ENCODE measurements at regions of chr7 and their contacts with region 1.

Region 1: GRCh38 chr7:112550468-112551060 is 69.8 kb downstream of the LSMEM1 start:
- DNase-seq: peak; percentile 64 to 85 (median 66)
- ATAC-seq: peak; percentile 88
- H3K4me3 ChIP-seq: no peak overlapping the region
- H3K27ac ChIP-seq: no peak overlapping the region
- H3K4me1 ChIP-seq: peaks cover 0 to 5% of the 10 kb centered on the region in 2 experiments; a peak in 2 of 5 replicates
- H3K27me3 ChIP-seq: peaks cover 0 to 10% of the 10 kb centered on the region in 2 experiments; a peak in 3 of 5 replicates
- CTCF ChIP-seq: peak; percentile 90 to 99 (median 91)
- EP300 ChIP-seq: 0 out of 2 replicates have a peak, but pooled peaks have one; percentile 27
- POLR2A ChIP-seq: no peak
- RAD21 ChIP-seq: peak; percentile 99 to 100

Region 2: GRCh38 chr7:112481833-112482670 is 68.5 kb before region 1 on chr7:
- CTCF ChIA-PET with region 1: no interaction called
- POLR2A ChIA-PET with region 1: no interaction called
- in situ Hi-C with region 1: no loop called
- intact Hi-C with region 1: loop called (anchors 1 kb)
- DNase-seq: peak in 2 of 4 experiments; percentile 50 to 67
- ATAC-seq: peak; percentile 49
- H3K4me3 ChIP-seq: no peak overlapping the region
- H3K27ac ChIP-seq: no peak overlapping the region
- H3K4me1 ChIP-seq: peaks cover 4 to 24% of the 10 kb centered on the region in 2 experiments; a peak in 3 of 5 replicates
- H3K27me3 ChIP-seq: no peaks in the 10 kb centered on the region
- CTCF ChIP-seq: no peak
- EP300 ChIP-seq: no peak
- POLR2A ChIP-seq: no peak
- RAD21 ChIP-seq: no peak

Region 3: GRCh38 chr7:112869111-112869757 is 318.7 kb after region 1 on chr7:
- CTCF ChIA-PET with region 1: interaction called, 15 read pairs
- POLR2A ChIA-PET with region 1: no interaction called
- in situ Hi-C with region 1: loop called (anchors 10 kb)
- intact Hi-C with region 1: loop called (anchors 1 kb)
- DNase-seq: peak; percentile 79 to 84 (median 82)
- ATAC-seq: peak; percentile 97
- H3K4me3 ChIP-seq: no peak overlapping the region
- H3K27ac ChIP-seq: no peak overlapping the region
- H3K4me1 ChIP-seq: no peaks in the 10 kb centered on the region; a peak in 1 of 5 replicates
- H3K27me3 ChIP-seq: no peaks in the 10 kb centered on the region
- CTCF ChIP-seq: peak; percentile 99 to 100 (median 100)
- EP300 ChIP-seq: no peak
- POLR2A ChIP-seq: no peak
- RAD21 ChIP-seq: peak; percentile 74 to 95

Region 4: GRCh38 chr7:113015032-113015645 is 464.6 kb after region 1 on chr7:
- CTCF ChIA-PET with region 1: no interaction called
- POLR2A ChIA-PET with region 1: no interaction called
- in situ Hi-C with region 1: no loop called
- intact Hi-C with region 1: loop called (anchors 5 kb)
- DNase-seq: peak in 2 of 4 experiments; percentile 20 to 52
- ATAC-seq: peak; percentile 65
- H3K4me3 ChIP-seq: no peak overlapping the region
- H3K27ac ChIP-seq: no peak overlapping the region
- H3K4me1 ChIP-seq: peaks cover 0 to 3% of the 10 kb centered on the region in 2 experiments; a peak in 1 of 5 replicates
- H3K27me3 ChIP-seq: no peaks in the 10 kb centered on the region
- CTCF ChIP-seq: peak; percentile 36 to 80 (median 48); a peak in 4 of 6 replicates
- EP300 ChIP-seq: no peak
- POLR2A ChIP-seq: no peak
- RAD21 ChIP-seq: peak; percentile 93 to 94

Region 5: DNA sequence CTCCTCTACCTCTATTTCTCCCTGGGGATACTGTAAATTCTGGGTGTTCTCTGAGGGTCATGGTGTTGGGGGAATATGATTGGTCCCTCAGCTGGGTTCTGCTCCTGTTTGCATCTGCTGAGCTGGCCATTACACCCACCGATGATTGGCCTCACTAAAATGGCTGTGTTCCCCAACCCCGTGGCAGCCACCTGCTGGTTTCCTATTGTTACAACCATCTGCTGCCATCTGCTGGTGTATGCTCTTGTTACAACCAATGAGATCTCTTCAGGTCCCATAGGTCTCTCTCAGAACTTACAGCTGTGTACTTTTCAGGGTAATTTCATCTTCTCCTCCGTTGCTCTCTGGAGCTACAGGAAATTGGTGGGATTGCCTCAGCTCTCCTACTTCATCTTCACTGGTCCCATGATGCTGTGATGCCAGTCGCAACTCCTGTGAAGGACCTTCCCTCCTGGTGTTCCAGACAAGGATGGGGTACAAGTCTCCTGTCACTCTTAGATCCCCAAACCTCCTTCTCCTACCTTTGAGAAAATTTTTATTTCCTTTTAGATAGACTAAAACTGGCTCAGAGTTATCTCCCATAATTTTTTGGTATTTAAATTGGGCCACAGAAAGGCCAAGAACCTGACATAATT is 871.2 kb after region 1 on chr7:
- CTCF ChIA-PET with region 1: interaction called, 6 read pairs
- POLR2A ChIA-PET with region 1: no interaction called
- in situ Hi-C with region 1: no loop called
- intact Hi-C with region 1: loop called (anchors 1 kb)
- DNase-seq: peak; percentile 78 to 93 (median 80)
- ATAC-seq: peak; percentile 100
- H3K4me3 ChIP-seq: no peak overlapping the region
- H3K27ac ChIP-seq: no peak overlapping the region
- H3K4me1 ChIP-seq: no peaks in the 10 kb centered on the region
- H3K27me3 ChIP-seq: no peaks in the 10 kb centered on the region
- CTCF ChIP-seq: peak; percentile 95 to 99 (median 99)
- EP300 ChIP-seq: no peak
- POLR2A ChIP-seq: no peak
- RAD21 ChIP-seq: peak; percentile 94 to 95

Region 6: GRCh38 chr7:113710310-113711106 is 1159.9 kb after region 1 on chr7:
- CTCF ChIA-PET with region 1: no interaction called
- POLR2A ChIA-PET with region 1: no interaction called
- in situ Hi-C with region 1: no loop called
- intact Hi-C with region 1: loop called (anchors 1 kb)
- DNase-seq: peak; percentile 59 to 87 (median 75)
- ATAC-seq: peak; percentile 90
- H3K4me3 ChIP-seq: no peak overlapping the region
- H3K27ac ChIP-seq: no peak overlapping the region
- H3K4me1 ChIP-seq: no peaks in the 10 kb centered on the region
- H3K27me3 ChIP-seq: no peaks in the 10 kb centered on the region
- CTCF ChIP-seq: peak; percentile 70 to 92 (median 88)
- EP300 ChIP-seq: peak; percentile 3; the same call in 1 of the 2 replicates
- POLR2A ChIP-seq: no peak
- RAD21 ChIP-seq: peak; percentile 53 to 70